Posterior cingulate gyrus (tissue), 11 donors: ENCODE measurements at regions of chr2 and their contacts with region 1.

Region 1: DNA sequence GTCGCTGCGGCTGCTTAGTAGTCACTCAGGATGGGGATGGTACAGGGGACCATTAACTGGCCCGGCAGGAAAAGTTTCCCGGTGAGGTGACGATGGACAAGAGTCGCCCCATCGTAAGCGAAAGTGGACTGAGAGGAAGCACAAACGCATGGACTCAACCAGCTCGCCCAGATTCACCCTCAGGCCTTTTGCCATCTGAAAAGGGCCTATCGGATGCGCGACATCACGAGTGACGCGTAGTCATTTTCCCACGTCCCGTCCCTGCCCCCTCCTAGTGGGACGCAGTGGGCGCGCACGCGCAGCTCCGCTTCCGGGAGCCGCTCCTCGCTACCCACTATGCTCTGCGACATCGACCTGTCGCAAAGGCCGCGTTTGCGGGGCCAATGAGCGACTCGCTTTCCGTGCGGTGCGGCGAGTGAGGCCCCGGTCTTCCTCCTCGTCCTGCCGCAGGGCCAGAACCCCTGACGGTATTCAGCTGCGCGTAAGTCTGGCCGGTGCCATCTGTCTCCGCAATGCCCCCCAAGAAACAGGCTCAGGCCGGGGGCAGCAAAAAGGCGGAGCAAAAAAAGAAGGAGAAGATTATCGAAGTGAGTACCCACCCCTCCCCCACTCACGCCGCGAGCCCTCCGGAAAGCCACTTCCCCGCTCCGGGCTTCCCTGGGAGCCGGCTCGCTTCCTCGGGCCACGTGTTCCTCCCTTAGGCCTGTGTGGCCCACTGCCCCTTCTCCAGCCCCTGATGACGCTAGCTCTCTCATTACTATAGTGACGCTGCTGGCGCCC is at the start of gene ZC3H15:
- DNase-seq: peak; percentile 92 to 99 (median 96)

Region 2: GRCh38 chr2:186589612-186590349 is 103.7 kb after region 1 on chr2 and contains the start of gene ITGAV:
- intact Hi-C with region 1: loop called (anchors 10 kb)
- DNase-seq: peak; percentile 64 to 97 (median 77)

Region 3: GRCh38 chr2:186771850-186772611 is 286.0 kb after region 1 on chr2:
- intact Hi-C with region 1: no loop called
- DNase-seq: no peak